ENCODE measurements at regions of chr2 and their contacts with region 1.

Region 1: DNA sequence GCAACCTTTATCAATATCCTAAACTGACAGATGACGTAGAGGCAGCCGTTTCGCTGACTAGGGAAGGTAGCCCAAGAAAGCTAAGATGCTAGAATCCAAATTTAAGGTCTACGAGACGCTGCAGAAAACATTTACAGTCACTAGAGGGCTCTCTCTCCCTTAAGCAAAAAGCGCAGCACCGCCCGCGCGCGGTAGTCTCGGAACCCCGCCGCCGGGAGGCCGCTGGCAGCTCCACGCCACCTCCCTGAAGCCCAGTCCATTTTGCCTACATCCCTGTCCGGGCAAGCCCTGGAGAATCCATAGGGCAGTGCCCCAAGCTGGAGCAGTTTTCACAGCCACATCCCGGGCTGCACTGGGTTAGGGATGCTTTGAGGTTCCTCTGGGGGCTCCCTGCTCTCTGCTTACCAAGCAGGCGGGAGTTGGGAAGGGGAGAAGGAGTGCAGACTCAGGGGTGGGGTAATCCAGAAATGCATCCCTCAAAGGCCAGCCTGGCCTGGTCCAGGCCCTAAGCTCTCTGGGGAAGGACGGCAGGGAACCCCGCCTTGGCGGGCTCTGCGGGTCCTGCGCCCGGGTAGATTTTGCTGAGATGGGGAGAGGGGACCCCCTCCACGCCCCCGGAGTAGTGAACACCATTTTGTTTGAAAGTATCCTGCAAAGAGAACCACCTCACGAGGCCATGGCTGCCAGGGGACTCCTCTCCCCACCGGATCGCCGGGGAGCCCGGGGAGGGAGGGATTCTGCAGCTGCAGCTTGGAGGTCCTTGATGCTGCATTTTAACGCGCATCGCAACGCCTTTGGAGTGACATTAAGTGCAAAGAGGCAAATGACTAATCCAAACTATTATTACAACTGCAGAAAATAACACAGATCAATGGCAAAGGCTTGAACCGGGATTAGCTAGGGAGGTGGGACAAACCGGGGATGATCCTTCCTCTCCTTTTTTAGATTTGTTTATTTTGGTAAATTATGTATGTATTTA is 1.3 kb upstream of the DPYSL5 start:
- DNase-seq: peak; percentile 52
- H3K4me3 ChIP-seq: 0 out of 2 replicates have a peak overlapping the region, but pooled peaks have one; percentile 7
- H3K27ac ChIP-seq: no peak overlapping the region
- H3K27me3 ChIP-seq: peaks cover 74% of the 10 kb centered on the region
- CTCF ChIP-seq: peak; percentile 85

Region 2: DNA sequence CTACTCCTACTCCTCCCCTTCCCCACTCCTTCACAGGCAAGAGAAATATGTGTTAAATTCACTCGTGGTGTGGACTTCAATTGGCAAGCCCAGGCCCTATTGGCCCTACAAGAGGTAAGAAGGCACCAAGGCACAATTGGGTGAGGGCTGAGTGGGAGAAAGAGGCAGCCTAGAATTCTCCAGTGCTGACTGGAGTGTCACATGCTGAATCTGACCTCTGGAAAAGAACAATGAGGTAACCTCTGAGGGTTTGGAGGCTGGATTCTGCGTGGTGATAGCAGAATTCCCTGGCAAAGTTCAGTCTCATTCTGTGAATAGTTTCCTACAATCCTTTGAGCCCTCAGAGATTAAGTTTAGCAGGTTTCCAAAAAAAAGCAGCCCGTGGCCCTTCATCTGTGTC is 53.9 kb before region 1 on chr2:
- CTCF ChIA-PET with region 1: no interaction called
- POLR2A ChIA-PET with region 1: no interaction called
- DNase-seq: no peak
- H3K4me3 ChIP-seq: no peak overlapping the region
- H3K27ac ChIP-seq: no peak overlapping the region
- H3K27me3 ChIP-seq: no peaks in the 10 kb centered on the region
- CTCF ChIP-seq: no peak

Region 3: GRCh38 chr2:26897807-26898479 is 51.3 kb after region 1 on chr2:
- CTCF ChIA-PET with region 1: interaction called, 15 read pairs
- POLR2A ChIA-PET with region 1: no interaction called
- DNase-seq: no peak
- H3K4me3 ChIP-seq: no peak overlapping the region
- H3K27ac ChIP-seq: no peak overlapping the region
- H3K27me3 ChIP-seq: peaks cover 28% of the 10 kb centered on the region
- CTCF ChIP-seq: no peak

Region 4: DNA sequence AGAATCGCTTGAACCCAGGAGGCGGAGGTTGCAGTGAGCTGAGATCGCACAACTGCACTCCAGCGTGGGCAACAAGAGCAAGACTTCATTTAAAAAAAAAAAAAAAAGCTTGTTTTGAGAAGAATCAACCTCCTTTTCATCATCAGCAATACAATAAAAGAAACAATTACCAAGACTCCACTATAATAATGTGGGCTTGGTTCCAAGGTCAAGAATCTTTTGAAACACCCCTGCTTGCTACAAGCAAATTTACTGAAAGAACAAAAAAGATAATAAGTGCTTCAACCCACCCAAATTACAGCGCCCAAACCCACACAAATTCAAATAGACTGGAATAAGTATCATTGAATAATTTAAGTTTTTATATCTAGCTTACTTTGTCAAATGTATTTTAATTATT is 90.2 kb after region 1 on chr2:
- CTCF ChIA-PET with region 1: interaction called, 95 read pairs
- POLR2A ChIA-PET with region 1: no interaction called
- DNase-seq: no peak
- H3K4me3 ChIP-seq: no peak overlapping the region
- H3K27ac ChIP-seq: no peak overlapping the region
- H3K27me3 ChIP-seq: peaks cover 35% of the 10 kb centered on the region
- CTCF ChIP-seq: no peak

Region 5: GRCh38 chr2:26954135-26954534 is 107.5 kb after region 1 on chr2:
- CTCF ChIA-PET with region 1: interaction called, 17 read pairs
- POLR2A ChIA-PET with region 1: interaction called, 5 read pairs
- DNase-seq: no peak
- H3K4me3 ChIP-seq: no peak overlapping the region
- H3K27ac ChIP-seq: no peak overlapping the region
- H3K27me3 ChIP-seq: peaks cover 38% of the 10 kb centered on the region
- CTCF ChIP-seq: no peak

Region 6: DNA sequence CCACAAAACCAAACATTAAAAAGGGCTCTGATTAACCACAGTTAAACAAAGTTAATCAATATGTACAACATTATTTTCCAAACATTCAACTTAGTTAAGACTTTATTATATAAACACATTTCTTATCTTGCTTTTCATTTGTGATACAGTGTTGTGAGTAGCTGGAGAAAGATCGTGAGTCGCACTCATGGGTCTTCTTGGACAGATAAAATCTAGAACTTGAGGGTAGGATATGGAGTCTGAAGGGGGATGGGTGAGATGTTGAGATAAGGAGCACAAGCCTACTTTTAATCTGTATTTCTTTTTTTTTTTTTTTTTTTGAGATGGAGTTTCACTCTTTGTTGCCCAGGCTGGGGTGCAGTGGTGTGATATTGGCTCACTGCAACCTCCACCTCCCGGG is 163.5 kb after region 1 on chr2:
- CTCF ChIA-PET with region 1: interaction called, 147 read pairs
- POLR2A ChIA-PET with region 1: no interaction called
- DNase-seq: no peak
- H3K4me3 ChIP-seq: no peak overlapping the region
- H3K27ac ChIP-seq: no peak overlapping the region
- H3K27me3 ChIP-seq: no peaks in the 10 kb centered on the region
- CTCF ChIP-seq: no peak